ENCODE measurements at regions of chr19 and their contacts with region 1.

Region 1: GRCh38 chr19:46529622-46530462 is 34.2 kb upstream of the PNMA8B start:
- DNase-seq: peak in 1 of 2 experiments; percentile 77
- H3K4me3 ChIP-seq: no peak overlapping the region
- H3K4me3 Mint-ChIP-seq: no peak overlapping the region
- H3K27ac Mint-ChIP-seq: no peak overlapping the region
- H3K4me1 ChIP-seq: no peaks in the 10 kb centered on the region
- H3K4me1 Mint-ChIP-seq: no peaks in the 10 kb centered on the region
- H3K27me3 ChIP-seq: no peaks in the 10 kb centered on the region
- H3K27me3 Mint-ChIP-seq: peaks cover 9% of the 10 kb centered on the region
- CTCF ChIP-seq: peak; percentile 94 to 97

Region 2: GRCh38 chr19:46426035-46426505 is 103.8 kb before region 1 on chr19:
- CTCF ChIA-PET with region 1: no interaction called
- POLR2A ChIA-PET with region 1: no interaction called
- intact Hi-C with region 1: no loop called
- DNase-seq: no peak
- H3K4me3 ChIP-seq: peak overlapping the region; percentile 44
- H3K4me3 Mint-ChIP-seq: peak overlapping the region; percentile 78
- H3K27ac Mint-ChIP-seq: peak overlapping the region; percentile 13
- H3K4me1 ChIP-seq: no peaks in the 10 kb centered on the region
- H3K4me1 Mint-ChIP-seq: peaks cover 6% of the 10 kb centered on the region
- H3K27me3 ChIP-seq: no peaks in the 10 kb centered on the region
- H3K27me3 Mint-ChIP-seq: peaks cover 16% of the 10 kb centered on the region
- CTCF ChIP-seq: no peak

Region 3: GRCh38 chr19:46542428-46543230 is 12.8 kb after region 1 on chr19:
- CTCF ChIA-PET with region 1: interaction called, 11 read pairs
- POLR2A ChIA-PET with region 1: no interaction called
- intact Hi-C with region 1: loop called (anchors 1 kb)
- DNase-seq: peak; percentile 83 to 91
- H3K4me3 ChIP-seq: no peak overlapping the region
- H3K4me3 Mint-ChIP-seq: no peak overlapping the region
- H3K27ac Mint-ChIP-seq: no peak overlapping the region
- H3K4me1 ChIP-seq: peaks cover 8% of the 10 kb centered on the region
- H3K4me1 Mint-ChIP-seq: no peaks in the 10 kb centered on the region
- H3K27me3 ChIP-seq: no peaks in the 10 kb centered on the region
- H3K27me3 Mint-ChIP-seq: peaks cover 7% of the 10 kb centered on the region
- CTCF ChIP-seq: peak; percentile 75 to 94

Region 4: DNA sequence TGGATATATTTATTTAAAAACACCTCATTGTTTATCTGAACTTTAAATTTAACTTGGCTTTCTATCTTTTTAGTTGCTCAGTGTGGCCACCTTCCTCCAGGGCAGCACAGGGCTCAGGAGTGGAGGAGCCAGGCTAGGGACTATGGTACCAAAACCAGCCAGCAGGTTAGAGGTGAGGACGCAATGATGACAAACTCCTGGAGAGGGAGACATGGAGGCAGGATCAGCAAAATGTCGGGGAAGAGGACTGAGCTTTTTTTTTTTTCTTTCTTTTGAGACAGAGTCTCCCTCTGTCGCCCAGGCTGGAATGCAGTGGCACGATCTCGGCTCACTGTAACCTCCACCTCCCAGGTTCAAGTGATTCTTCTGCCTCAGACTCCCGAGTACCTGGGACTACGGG is 41.7 kb after region 1 on chr19:
- CTCF ChIA-PET with region 1: no interaction called
- POLR2A ChIA-PET with region 1: no interaction called
- intact Hi-C with region 1: loop called (anchors 2 kb)
- DNase-seq: peak; percentile 76 to 78
- H3K4me3 ChIP-seq: no peak overlapping the region
- H3K4me3 Mint-ChIP-seq: no peak overlapping the region
- H3K27ac Mint-ChIP-seq: no peak overlapping the region
- H3K4me1 ChIP-seq: no peaks in the 10 kb centered on the region
- H3K4me1 Mint-ChIP-seq: no peaks in the 10 kb centered on the region
- H3K27me3 ChIP-seq: no peaks in the 10 kb centered on the region
- H3K27me3 Mint-ChIP-seq: no peaks in the 10 kb centered on the region
- CTCF ChIP-seq: peak; percentile 34 to 66